IMR-90 (cell line): ENCODE measurements at regions of chr7 and their contacts with region 1.

Region 1: DNA sequence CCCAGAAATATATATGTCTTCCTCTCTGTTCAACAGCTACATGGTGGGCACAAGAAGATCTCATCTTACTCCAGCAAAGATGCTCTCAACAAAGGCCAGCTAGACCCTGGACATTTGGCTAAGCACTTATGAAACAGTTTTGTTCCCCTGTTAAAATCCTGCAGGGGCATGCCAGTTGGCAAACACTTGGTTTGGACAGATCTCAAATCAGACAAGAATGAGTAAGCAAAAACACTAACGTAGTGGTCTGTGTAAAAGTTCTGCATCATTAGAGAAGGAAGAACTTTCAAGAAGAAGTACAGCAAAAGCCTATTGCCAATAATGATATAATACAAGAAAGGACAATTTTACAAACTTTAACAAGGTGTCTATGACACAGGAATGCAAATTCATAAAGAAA is 125.6 kb downstream of the CALN1 start:
- DNase-seq: no peak
- ATAC-seq: no peak
- H3K4me3 ChIP-seq: no peak overlapping the region
- H3K27ac ChIP-seq: no peak overlapping the region
- H3K4me1 ChIP-seq: no peaks in the 10 kb centered on the region
- H3K27me3 ChIP-seq: no peaks in the 10 kb centered on the region
- CTCF ChIP-seq: no peak
- POLR2A ChIP-seq: no peak
- RAD21 ChIP-seq: no peak

Region 2: GRCh38 chr7:71900556-71900955 is 386.0 kb before region 1 on chr7:
- CTCF ChIA-PET with region 1: no interaction called
- POLR2A ChIA-PET with region 1: no interaction called
- dilution Hi-C with region 1: no loop called
- in situ Hi-C with region 1: no loop called
- intact Hi-C with region 1: no loop called
- DNase-seq: no peak
- ATAC-seq: no peak
- H3K4me3 ChIP-seq: no peak overlapping the region
- H3K27ac ChIP-seq: no peak overlapping the region
- H3K4me1 ChIP-seq: no peaks in the 10 kb centered on the region
- H3K27me3 ChIP-seq: no peaks in the 10 kb centered on the region
- CTCF ChIP-seq: no peak
- POLR2A ChIP-seq: no peak
- RAD21 ChIP-seq: no peak

Region 3: DNA sequence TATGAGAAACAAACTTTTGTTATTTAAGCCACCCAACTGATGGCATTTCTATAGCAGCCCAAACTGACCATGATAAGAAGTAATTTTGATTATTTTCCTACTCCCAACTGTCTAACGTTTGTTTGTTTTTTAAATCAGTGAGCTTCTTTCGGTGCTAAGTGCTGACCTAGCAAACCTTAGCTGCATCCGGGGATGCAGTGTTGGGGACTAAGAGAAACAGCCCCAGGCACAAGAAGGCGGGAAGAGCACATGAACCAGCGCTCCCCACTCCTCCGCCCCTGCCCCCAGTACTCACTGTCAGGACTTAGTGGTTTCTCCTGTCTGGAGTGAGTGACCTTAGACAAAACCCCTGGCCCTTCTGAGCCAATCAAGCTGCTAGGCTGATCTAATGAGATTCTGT is 43.2 kb before region 1 on chr7:
- CTCF ChIA-PET with region 1: no interaction called
- POLR2A ChIA-PET with region 1: no interaction called
- dilution Hi-C with region 1: no loop called
- in situ Hi-C with region 1: no loop called
- intact Hi-C with region 1: loop called (anchors 1 kb)
- DNase-seq: no peak
- ATAC-seq: no peak
- H3K4me3 ChIP-seq: no peak overlapping the region
- H3K27ac ChIP-seq: no peak overlapping the region
- H3K4me1 ChIP-seq: no peaks in the 10 kb centered on the region
- H3K27me3 ChIP-seq: no peaks in the 10 kb centered on the region
- CTCF ChIP-seq: no peak
- POLR2A ChIP-seq: no peak
- RAD21 ChIP-seq: no peak